ENCODE measurements at regions of chr14 and their contacts with region 1.

Region 1: DNA sequence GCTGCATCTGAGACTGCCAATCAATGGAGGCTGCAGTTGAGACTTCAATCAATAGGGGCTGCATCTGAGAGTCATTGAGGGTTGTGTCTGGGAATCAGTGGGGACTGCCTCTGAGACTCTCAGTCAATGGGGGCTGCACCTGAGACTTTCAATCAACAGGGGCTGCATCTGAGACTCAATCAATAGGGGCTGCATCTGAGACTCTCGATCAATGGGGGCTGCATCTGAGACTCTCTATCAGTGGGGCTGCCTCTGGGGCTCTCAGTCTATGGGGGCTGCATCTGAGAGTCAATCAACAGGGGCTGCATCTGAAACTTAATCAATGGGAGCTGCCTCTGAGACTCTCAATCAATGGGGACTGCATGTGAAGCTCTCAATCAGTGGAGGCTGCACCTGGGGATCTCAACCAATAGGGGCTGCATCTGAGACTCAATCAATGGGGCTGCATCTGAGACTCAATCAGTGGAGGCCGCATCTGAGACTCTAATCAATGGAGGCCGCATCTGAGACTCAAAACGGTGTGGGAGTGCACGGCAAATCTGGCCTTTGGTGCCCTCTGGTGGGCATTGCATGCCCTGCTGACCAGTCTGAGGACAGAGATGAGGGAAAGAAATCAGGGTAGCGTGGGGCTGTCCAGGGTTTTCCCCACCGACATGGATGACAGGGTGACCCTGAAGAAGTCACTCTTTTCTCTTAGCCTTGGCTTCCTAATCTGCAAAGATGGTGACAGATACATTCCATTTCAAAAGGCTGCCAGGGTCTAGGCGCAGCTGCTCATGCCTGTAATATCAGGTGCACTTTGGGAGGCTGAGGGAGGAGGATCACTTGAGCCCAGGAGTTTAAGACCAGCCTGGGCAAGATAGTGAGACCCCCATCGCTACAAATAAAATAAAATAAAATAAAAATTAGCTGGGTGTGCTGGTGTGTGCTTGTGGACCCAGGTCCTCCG is 41.3 kb upstream of the EIF5 start:
- DNase-seq: peak; percentile 33 to 62
- ATAC-seq: peak; percentile 88 to 91
- H3K4me3 ChIP-seq: no peak overlapping the region
- H3K27ac ChIP-seq: no peak overlapping the region
- H3K4me1 ChIP-seq: no peaks in the 10 kb centered on the region
- H3K27me3 ChIP-seq: peaks cover 0 to 2% (median 0%) of the 10 kb centered on the region in 3 donors
- CTCF ChIP-seq: peak; percentile 90 to 95 (median 93)
- POLR2A ChIP-seq: no peak

Region 2: GRCh38 chr14:103078093-103078749 is 214.5 kb before region 1 on chr14:
- in situ Hi-C with region 1: loop called in 1 of 4 experiments (anchors 25 kb)
- intact Hi-C with region 1: loop called (anchors 1 kb)
- DNase-seq: peak; percentile 47 to 70
- ATAC-seq: peak; percentile 54 to 59
- H3K4me3 ChIP-seq: no peak overlapping the region
- H3K27ac ChIP-seq: no peak overlapping the region
- H3K4me1 ChIP-seq: peaks cover 4 to 17% of the 10 kb centered on the region in 2 donors
- H3K27me3 ChIP-seq: peaks cover 0 to 5% (median 2%) of the 10 kb centered on the region in 3 donors
- CTCF ChIP-seq: peak; percentile 52 to 78 (median 62)
- POLR2A ChIP-seq: no peak

Region 3: GRCh38 chr14:103185051-103185992 is 107.4 kb before region 1 on chr14:
- in situ Hi-C with region 1: loop called in 3 of 4 experiments (anchors 10 to 25 kb)
- intact Hi-C with region 1: loop called (anchors 1 kb)
- DNase-seq: no peak
- ATAC-seq: peak; percentile 49 to 57
- H3K4me3 ChIP-seq: no peak overlapping the region
- H3K27ac ChIP-seq: peak overlapping the region in 1 of 4 donors; percentile 60
- H3K4me1 ChIP-seq: peaks cover 6% of the 10 kb centered on the region in 2 donors
- H3K27me3 ChIP-seq: no peaks in the 10 kb centered on the region
- CTCF ChIP-seq: peak; percentile 47 to 62 (median 60)
- POLR2A ChIP-seq: no peak